ENCODE measurements at regions of chr10 and their contacts with region 1.

Region 1: GRCh38 chr10:22550732-22551131 is 163.6 kb downstream of the PIP4K2A start:
- DNase-seq: peak in 5 of 10 donors; percentile 34 to 87 (median 53)

Region 2: GRCh38 chr10:22334414-22335172 is 216.1 kb before region 1 on chr10:
- intact Hi-C with region 1: loop called (anchors 5 kb)
- DNase-seq: peak in 2 of 10 donors; percentile 75 to 83

Measured in posterior cingulate gyrus (tissue), 11 donors.